AG04449 (cell line): ENCODE measurements at regions of chr6 and their contacts with region 1.

Region 1: DNA sequence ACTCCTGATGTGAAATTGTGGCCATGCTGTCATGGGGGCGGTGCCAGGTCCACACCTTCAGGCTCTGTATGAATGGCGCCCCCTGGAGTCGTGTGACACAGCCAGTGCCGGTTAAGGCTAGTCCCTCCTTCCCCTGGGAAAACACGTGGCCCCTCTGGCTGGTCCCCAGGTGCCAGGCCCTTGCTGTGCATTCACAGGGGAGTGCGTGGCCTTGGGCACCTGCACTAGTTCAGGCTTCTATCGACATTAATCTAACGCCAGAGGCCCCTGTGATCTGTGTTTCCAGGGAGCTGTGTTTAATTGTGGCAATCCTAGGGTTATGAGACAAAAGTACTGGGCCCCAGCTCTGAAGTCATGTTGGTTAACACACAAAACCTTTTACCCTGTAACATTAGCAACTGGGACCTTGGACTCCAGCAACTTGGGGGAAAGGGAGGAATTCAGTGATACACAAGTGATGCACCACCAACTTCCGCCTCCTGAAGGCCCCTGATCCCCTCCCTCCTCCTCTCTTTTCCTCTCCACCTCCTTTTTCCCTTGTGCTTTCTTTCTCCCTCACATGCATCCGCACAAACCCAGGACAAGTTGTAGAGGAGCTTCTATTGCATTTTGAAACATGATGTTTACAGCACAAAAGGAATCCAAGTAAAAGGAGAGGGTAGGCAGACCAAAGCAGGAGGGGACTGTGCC is 74.0 kb downstream of the SSR1 start:
- DNase-seq: no peak
- H3K4me3 ChIP-seq: no peak overlapping the region
- CTCF ChIP-seq: peak; percentile 65

Region 2: GRCh38 chr6:6676910-6677441 is 562.1 kb before region 1 on chr6:
- CTCF ChIA-PET with region 1: interaction called, 52 read pairs
- POLR2A ChIA-PET with region 1: no interaction called
- DNase-seq: no peak
- H3K4me3 ChIP-seq: no peak overlapping the region
- CTCF ChIP-seq: peak; percentile 87

Region 3: DNA sequence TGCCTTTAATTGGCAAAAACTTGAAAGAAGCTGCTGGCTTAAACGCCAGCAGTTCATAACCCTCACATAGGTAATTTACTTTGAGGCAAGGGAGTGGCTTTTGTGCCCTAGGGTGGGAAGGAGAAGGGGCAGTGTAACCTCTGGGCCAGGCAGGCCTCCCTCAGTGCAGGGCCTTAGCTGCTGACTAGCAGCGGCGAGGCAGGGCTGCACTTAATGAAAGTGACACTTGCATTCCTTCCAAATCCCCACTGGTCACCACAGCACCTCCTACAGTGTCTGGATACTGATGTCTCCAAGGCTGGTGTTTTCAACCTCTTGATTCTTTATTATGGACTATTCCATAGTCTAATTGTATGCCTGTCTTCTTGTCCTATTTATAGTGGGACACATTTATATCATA is 497.8 kb before region 1 on chr6:
- CTCF ChIA-PET with region 1: interaction called, 12 read pairs
- POLR2A ChIA-PET with region 1: no interaction called
- DNase-seq: no peak
- H3K4me3 ChIP-seq: no peak overlapping the region
- CTCF ChIP-seq: no peak

Region 4: GRCh38 chr6:7145885-7146828 is 92.9 kb before region 1 on chr6:
- CTCF ChIA-PET with region 1: interaction called, 11 read pairs
- POLR2A ChIA-PET with region 1: no interaction called
- DNase-seq: peak; percentile 38
- H3K4me3 ChIP-seq: peak overlapping the region; percentile 7; the same call in 1 of the 2 replicates
- CTCF ChIP-seq: no peak

Region 5: DNA sequence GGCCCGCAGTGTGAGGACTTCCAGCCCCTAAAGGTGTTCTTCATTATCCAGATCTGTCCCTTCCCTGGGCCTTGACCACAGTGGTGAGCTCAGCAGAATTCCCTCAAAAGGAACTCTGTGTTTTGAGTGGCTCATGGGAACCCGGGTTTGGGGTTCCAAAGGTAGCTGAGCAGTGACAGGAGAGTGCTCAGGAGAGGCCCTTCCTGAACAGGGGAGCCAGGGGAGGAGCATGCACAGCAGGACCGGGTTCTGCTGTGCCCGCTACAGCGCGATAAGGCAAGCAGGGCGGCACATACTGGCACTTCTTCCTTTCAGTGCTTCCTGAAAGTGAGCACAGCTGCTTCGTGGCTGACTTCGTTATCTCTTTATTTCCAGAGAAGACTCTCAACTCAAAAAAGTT is 14.3 kb before region 1 on chr6:
- CTCF ChIA-PET with region 1: interaction called, 13 read pairs
- POLR2A ChIA-PET with region 1: no interaction called
- DNase-seq: no peak
- H3K4me3 ChIP-seq: no peak overlapping the region
- CTCF ChIP-seq: no peak

Region 6: GRCh38 chr6:7261032-7261841 is 22.2 kb after region 1 on chr6:
- CTCF ChIA-PET with region 1: interaction called, 25 read pairs
- POLR2A ChIA-PET with region 1: no interaction called
- DNase-seq: no peak
- H3K4me3 ChIP-seq: peak overlapping the region; percentile 77
- CTCF ChIP-seq: no peak